CD4-positive, alpha-beta T cell (primary cell): ENCODE measurements at regions of chr17 and their contacts with region 1.

Region 1: DNA sequence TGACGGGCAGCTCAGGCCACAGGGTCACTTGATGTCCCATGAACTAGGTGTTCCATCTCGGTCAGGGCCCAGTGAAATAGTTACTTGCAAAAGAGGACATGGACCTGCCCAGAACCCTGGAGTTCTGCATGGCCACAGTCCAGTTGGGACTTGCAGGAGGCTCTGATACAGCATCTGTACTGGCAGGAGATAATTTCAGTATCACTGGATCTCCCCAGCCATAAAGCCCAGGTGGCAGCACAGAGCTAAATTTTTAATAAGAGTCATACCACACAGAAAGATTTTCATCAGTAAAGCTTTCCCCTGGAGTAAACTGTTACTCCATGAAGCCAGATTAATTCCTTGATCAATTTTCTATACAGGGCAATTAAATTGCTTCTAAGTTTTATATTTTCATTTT is 18.0 kb upstream of the SLC16A5 start:
- DNase-seq: peak in 3 of 14 experiments; percentile 19 to 42 (median 36)
- ATAC-seq: no peak
- H3K4me3 ChIP-seq: no peak overlapping the region
- H3K4me3 Mint-ChIP-seq: peak overlapping the region; percentile 50
- H3K27ac ChIP-seq: no peak overlapping the region
- H3K27ac Mint-ChIP-seq: peak overlapping the region; percentile 50
- H3K4me1 ChIP-seq: peaks cover 31% of the 10 kb centered on the region
- H3K4me1 Mint-ChIP-seq: peaks cover 30% of the 10 kb centered on the region
- H3K27me3 ChIP-seq: no peaks in the 10 kb centered on the region
- H3K27me3 Mint-ChIP-seq: no peaks in the 10 kb centered on the region
- CTCF ChIP-seq: peak; percentile 23

Region 2: GRCh38 chr17:75131280-75132017 is 61.7 kb after region 1 on chr17 and contains the start of gene NT5C:
- CTCF ChIA-PET with region 1: interaction called, 3 read pairs
- POLR2A ChIA-PET with region 1: interaction called, 13 read pairs
- intact Hi-C with region 1: no loop called
- DNase-seq: peak in 10 of 14 experiments; percentile 44 to 78 (median 56)
- ATAC-seq: peak; percentile 72
- H3K4me3 ChIP-seq: peak within 1 kb of the TSS; percentile 83
- H3K4me3 Mint-ChIP-seq: peak within 1 kb of the TSS; percentile 88
- H3K27ac ChIP-seq: peak within 1 kb of the TSS; percentile 45 to 55
- H3K27ac Mint-ChIP-seq: peak within 1 kb of the TSS; percentile 70
- H3K4me1 ChIP-seq: peaks cover 21% of the 10 kb centered on the region
- H3K4me1 Mint-ChIP-seq: peaks cover 7% of the 10 kb centered on the region
- H3K27me3 ChIP-seq: no peaks in the 10 kb centered on the region
- H3K27me3 Mint-ChIP-seq: no peaks in the 10 kb centered on the region
- CTCF ChIP-seq: peak; percentile 70
- total RNA-seq, gene NT5C: 14.1 to 16.1 TPM

Region 3: GRCh38 chr17:75238684-75239191 is 169.0 kb after region 1 on chr17:
- CTCF ChIA-PET with region 1: no interaction called
- POLR2A ChIA-PET with region 1: no interaction called
- intact Hi-C with region 1: no loop called
- DNase-seq: peak; percentile 45 to 82 (median 54)
- ATAC-seq: peak; percentile 52
- H3K4me3 ChIP-seq: no peak overlapping the region
- H3K4me3 Mint-ChIP-seq: peak overlapping the region; percentile 12
- H3K27ac ChIP-seq: peak overlapping the region in 1 of 2 donors; percentile 26
- H3K27ac Mint-ChIP-seq: peak overlapping the region; percentile 68
- H3K4me1 ChIP-seq: peaks cover 47% of the 10 kb centered on the region
- H3K4me1 Mint-ChIP-seq: peaks cover 18% of the 10 kb centered on the region
- H3K27me3 ChIP-seq: no peaks in the 10 kb centered on the region
- H3K27me3 Mint-ChIP-seq: no peaks in the 10 kb centered on the region
- CTCF ChIP-seq: peak; percentile 71